Activated CD4-positive, alpha-beta T cell treated with anti-CD3 and anti-CD28 coated beads for 36 hours (primary cell): ENCODE measurements at regions of chr17 and their contacts with region 1.

Region 1: DNA sequence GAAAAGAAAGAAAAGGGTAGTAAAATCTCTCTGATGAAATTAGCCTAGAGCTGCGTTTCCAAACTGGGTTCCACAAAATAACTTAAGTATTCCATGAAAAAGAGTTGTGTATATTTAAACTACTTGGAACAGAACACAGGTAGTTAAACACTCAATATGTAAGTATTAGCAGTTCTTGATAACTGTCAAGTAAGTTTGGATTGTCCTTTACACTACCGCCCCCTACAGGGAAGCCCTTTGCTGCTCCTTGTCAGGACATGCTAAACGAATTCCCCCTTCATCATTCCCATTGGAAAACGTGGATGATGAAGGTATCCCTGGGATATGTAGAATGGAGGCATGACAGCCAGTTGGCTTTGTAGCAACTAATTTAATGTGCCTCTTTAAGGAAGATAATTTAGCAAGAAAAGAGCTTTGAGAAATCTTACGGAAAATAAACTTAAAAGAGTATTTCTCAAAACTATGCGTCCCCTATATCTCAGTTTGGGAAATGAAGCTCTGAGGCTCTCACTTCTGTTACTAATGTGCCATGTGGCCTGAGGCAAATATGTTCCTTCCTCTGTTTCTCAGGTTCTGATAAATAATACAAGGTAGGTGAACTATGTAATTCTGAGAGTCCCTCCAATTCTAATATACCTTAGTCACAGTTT is 18.8 kb downstream of the NCBP3 start:
- DNase-seq: peak; percentile 83
- ATAC-seq: peak; percentile 73
- H3K4me3 Mint-ChIP-seq: no peak overlapping the region
- H3K27ac Mint-ChIP-seq: no peak overlapping the region
- H3K4me1 Mint-ChIP-seq: peaks cover 2% of the 10 kb centered on the region
- H3K27me3 Mint-ChIP-seq: no peaks in the 10 kb centered on the region

Region 2: DNA sequence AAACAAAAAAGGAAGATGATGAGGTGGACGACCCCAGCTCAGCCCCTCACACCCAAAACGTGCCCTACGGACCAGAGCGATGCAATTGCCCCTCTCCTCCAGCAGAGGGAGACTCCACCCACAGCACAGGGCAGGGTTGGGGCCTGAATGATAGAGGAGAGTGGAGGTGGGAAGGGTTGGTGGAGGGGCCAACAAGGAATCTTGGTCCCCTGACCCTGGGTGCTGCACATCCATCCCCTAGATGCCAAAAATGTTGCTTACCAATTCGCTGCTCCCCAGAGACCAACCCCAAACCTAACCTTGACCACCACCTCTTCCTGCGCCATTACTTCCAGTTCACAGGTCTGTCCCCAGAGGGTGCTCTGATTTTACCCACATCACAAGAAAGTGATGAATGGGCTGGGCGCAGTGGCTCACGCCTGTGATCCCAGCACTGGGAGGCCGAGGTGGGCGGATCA is 144.2 kb before region 1 on chr17:
- CTCF ChIA-PET with region 1: interaction called, 4 read pairs
- POLR2A ChIA-PET with region 1: no interaction called
- intact Hi-C with region 1: loop called in 1 of 2 experiments (anchors 2 kb)
- DNase-seq: peak; percentile 76
- ATAC-seq: peak; percentile 96
- H3K4me3 Mint-ChIP-seq: no peak overlapping the region
- H3K27ac Mint-ChIP-seq: peak overlapping the region; percentile 39
- H3K4me1 Mint-ChIP-seq: peaks cover 10% of the 10 kb centered on the region
- H3K27me3 Mint-ChIP-seq: no peaks in the 10 kb centered on the region

Region 3: DNA sequence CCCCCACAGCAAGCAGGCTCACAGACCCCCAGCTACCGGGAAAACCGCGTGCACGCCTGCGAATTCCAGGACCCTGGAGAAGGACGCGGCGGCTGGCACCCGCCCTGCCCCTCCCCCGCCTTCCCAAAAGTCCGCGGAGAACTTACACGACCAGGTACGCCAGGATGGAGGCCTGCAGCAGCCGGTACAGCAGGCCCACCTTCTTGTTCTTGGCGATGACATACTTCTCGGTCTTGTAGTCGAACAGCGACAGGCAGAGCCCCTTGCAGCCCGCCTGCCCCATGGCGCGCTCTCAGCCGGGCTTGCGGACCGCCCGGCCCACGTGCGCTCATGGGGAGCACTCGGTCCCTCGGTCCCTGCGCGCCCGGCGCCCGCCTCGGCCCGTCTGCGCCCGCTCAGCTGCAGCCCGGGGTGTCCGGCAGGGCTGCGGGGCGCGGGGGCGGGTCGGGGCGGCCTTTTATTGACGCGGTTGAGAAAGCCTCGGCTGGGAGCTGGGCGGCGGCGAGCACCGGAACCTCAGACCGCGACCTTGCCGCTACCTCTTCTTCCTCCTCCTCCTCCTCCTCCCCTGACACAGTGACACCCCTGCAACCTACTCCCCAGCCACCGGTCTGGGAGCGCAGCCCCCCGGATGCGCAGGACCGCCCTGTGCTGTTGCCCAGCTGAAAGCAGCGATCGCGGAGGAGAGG is 131.4 kb before region 1 on chr17 and contains the start of gene P2RX5:
- CTCF ChIA-PET with region 1: interaction called, 4 read pairs
- POLR2A ChIA-PET with region 1: no interaction called
- intact Hi-C with region 1: loop called in 1 of 2 experiments (anchors 5 kb)
- DNase-seq: peak; percentile 67
- ATAC-seq: peak; percentile 48
- H3K4me3 Mint-ChIP-seq: peak within 1 kb of the TSS; percentile 81
- H3K27ac Mint-ChIP-seq: peak within 1 kb of the TSS; percentile 94
- H3K4me1 Mint-ChIP-seq: peaks cover 15% of the 10 kb centered on the region
- H3K27me3 Mint-ChIP-seq: no peaks in the 10 kb centered on the region
- total RNA-seq, gene P2RX5: 69.7 to 77.5 TPM

Region 4: DNA sequence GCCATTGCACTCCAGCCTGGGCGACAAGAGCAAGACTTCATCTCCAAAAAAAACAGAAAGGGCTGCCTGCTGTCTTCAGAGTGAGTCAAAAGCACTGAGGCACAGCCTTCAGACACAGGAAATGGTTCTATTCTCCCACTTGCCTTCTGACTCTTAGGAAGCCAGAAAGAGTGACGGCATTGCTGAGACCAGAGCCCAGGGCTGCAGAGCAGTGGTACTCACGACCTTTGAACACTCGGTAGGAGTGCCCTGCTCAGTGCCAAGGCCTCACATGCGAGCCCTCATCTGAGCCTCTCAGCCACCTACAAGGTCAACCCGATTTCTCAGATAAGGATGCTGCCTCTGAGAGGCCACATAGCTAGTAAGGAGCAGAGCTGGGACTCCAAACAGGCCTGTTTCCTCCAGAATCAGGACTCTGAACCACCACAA is 22.7 kb before region 1 on chr17:
- CTCF ChIA-PET with region 1: interaction called, 27 read pairs
- POLR2A ChIA-PET with region 1: no interaction called
- intact Hi-C with region 1: no loop called
- DNase-seq: peak; percentile 61
- ATAC-seq: peak; percentile 98
- H3K4me3 Mint-ChIP-seq: no peak overlapping the region
- H3K27ac Mint-ChIP-seq: peak overlapping the region; percentile 19
- H3K4me1 Mint-ChIP-seq: peaks cover 26% of the 10 kb centered on the region
- H3K27me3 Mint-ChIP-seq: no peaks in the 10 kb centered on the region

Region 5: GRCh38 chr17:3838206-3838605 is 11.0 kb after region 1 on chr17:
- CTCF ChIA-PET with region 1: interaction called, 30 read pairs
- POLR2A ChIA-PET with region 1: no interaction called
- intact Hi-C with region 1: no loop called
- DNase-seq: no peak
- ATAC-seq: no peak
- H3K4me3 Mint-ChIP-seq: no peak overlapping the region
- H3K27ac Mint-ChIP-seq: no peak overlapping the region
- H3K4me1 Mint-ChIP-seq: peaks cover 5% of the 10 kb centered on the region
- H3K27me3 Mint-ChIP-seq: no peaks in the 10 kb centered on the region

Region 6: GRCh38 chr17:3894911-3895343 is 67.7 kb after region 1 on chr17:
- CTCF ChIA-PET with region 1: no interaction called
- POLR2A ChIA-PET with region 1: no interaction called
- intact Hi-C with region 1: no loop called
- DNase-seq: no peak
- ATAC-seq: no peak
- H3K4me3 Mint-ChIP-seq: no peak overlapping the region
- H3K27ac Mint-ChIP-seq: no peak overlapping the region
- H3K4me1 Mint-ChIP-seq: peaks cover 29% of the 10 kb centered on the region
- H3K27me3 Mint-ChIP-seq: no peaks in the 10 kb centered on the region

Region 7: GRCh38 chr17:4229627-4230541 is 402.6 kb after region 1 on chr17:
- CTCF ChIA-PET with region 1: no interaction called
- POLR2A ChIA-PET with region 1: no interaction called
- intact Hi-C with region 1: no loop called
- DNase-seq: no peak
- ATAC-seq: no peak
- H3K4me3 Mint-ChIP-seq: no peak overlapping the region
- H3K27ac Mint-ChIP-seq: no peak overlapping the region
- H3K4me1 Mint-ChIP-seq: peaks cover 21% of the 10 kb centered on the region
- H3K27me3 Mint-ChIP-seq: no peaks in the 10 kb centered on the region